ENCODE measurements at regions of chr20 and their contacts with region 1.

Region 1: DNA sequence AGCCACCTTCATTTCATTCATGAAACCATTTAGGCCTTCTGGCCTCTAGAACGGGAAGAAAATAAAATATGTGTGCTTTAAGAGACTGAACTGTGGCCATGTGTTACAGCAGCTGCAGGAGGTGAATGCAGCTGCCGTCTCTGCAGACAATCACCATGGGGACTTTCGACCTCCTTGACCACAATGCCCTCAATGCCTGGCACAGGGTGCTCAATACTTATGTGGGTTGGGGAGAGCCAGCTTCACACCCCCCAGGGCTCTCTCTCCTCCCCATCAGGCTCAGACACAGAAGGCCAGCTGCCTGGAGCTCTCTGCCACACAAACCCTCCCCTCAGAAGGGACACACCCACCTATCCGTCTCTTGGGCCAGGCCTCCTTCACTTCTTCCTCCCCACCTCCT is 43.5 kb downstream of the ANKRD60 start:
- DNase-seq: no peak
- H3K4me3 ChIP-seq: no peak overlapping the region
- H3K27ac ChIP-seq: no peak overlapping the region
- H3K4me1 ChIP-seq: no peaks in the 10 kb centered on the region
- H3K27me3 ChIP-seq: no peaks in the 10 kb centered on the region
- CTCF ChIP-seq: no peak

Region 2: DNA sequence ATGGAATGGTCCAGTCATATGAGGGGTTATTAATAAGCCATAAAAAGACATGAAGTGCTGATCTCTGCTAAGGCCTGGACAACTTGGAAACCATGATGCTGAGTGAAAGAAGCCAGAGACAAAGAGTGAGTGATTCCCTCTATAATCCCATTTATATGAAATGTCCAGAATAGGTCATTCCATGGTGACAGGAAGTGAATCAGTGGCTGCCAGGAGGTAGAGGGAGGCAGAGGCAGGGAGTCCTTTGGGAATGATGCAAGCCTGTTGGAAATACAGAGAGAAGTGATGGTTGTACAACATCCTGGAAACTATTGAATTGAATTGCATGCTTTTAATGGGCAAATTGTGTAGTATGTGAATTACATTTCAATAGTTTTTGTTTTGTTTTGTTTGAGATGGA is 17.1 kb after region 1 on chr20:
- CTCF ChIA-PET with region 1: interaction called, 11 read pairs
- POLR2A ChIA-PET with region 1: no interaction called
- intact Hi-C with region 1: no loop called
- DNase-seq: no peak
- H3K4me3 ChIP-seq: no peak overlapping the region
- H3K27ac ChIP-seq: no peak overlapping the region
- H3K4me1 ChIP-seq: no peaks in the 10 kb centered on the region
- H3K27me3 ChIP-seq: no peaks in the 10 kb centered on the region
- CTCF ChIP-seq: no peak